Esophagus muscularis mucosa (tissue), 4 donors: ENCODE measurements at regions of chr3 and their contacts with region 1.

Region 1: GRCh38 chr3:142356818-142357217 is 91.0 kb downstream of the XRN1 start:
- DNase-seq: no peak
- H3K4me3 ChIP-seq: no peak overlapping the region
- H3K27ac ChIP-seq: no peak overlapping the region
- H3K4me1 ChIP-seq: no peaks in the 10 kb centered on the region
- H3K27me3 ChIP-seq: no peaks in the 10 kb centered on the region
- CTCF ChIP-seq: no peak
- EP300 ChIP-seq: no peak
- POLR2A ChIP-seq: no peak

Region 2: GRCh38 chr3:142418926-142419592 is 62.2 kb after region 1 on chr3:
- intact Hi-C with region 1: loop called (anchors 10 kb)
- DNase-seq: no peak
- H3K4me3 ChIP-seq: no peak overlapping the region
- H3K27ac ChIP-seq: no peak overlapping the region
- H3K4me1 ChIP-seq: no peaks in the 10 kb centered on the region
- H3K27me3 ChIP-seq: no peaks in the 10 kb centered on the region
- CTCF ChIP-seq: no peak
- EP300 ChIP-seq: no peak
- POLR2A ChIP-seq: no peak